ENCODE measurements at regions of chr2 and their contacts with region 1.

Region 1: GRCh38 chr2:109238580-109238979 is 109.6 kb downstream of the SH3RF3 start:
- DNase-seq: no peak
- H3K4me3 ChIP-seq: no peak overlapping the region
- H3K27ac ChIP-seq: no peak overlapping the region
- H3K4me1 ChIP-seq: no peaks in the 10 kb centered on the region
- CTCF ChIP-seq: no peak

Region 2: GRCh38 chr2:109226128-109226527 is 12.5 kb before region 1 on chr2:
- CTCF ChIA-PET with region 1: no interaction called
- POLR2A ChIA-PET with region 1: interaction called, 16 read pairs
- intact Hi-C with region 1: no loop called
- DNase-seq: no peak
- H3K4me3 ChIP-seq: no peak overlapping the region
- H3K27ac ChIP-seq: no peak overlapping the region
- H3K4me1 ChIP-seq: no peaks in the 10 kb centered on the region
- CTCF ChIP-seq: no peak

Region 3: GRCh38 chr2:109304731-109305470 is 66.3 kb after region 1 on chr2:
- CTCF ChIA-PET with region 1: no interaction called
- POLR2A ChIA-PET with region 1: no interaction called
- intact Hi-C with region 1: no loop called
- DNase-seq: no peak
- H3K4me3 ChIP-seq: no peak overlapping the region
- H3K27ac ChIP-seq: no peak overlapping the region
- H3K4me1 ChIP-seq: no peaks in the 10 kb centered on the region
- CTCF ChIP-seq: no peak

Measured in OCI-LY7 (cell line).